Gastrocnemius medialis (tissue), 4 donors: ENCODE measurements at regions of chr7 and their contacts with region 1.

Region 1: DNA sequence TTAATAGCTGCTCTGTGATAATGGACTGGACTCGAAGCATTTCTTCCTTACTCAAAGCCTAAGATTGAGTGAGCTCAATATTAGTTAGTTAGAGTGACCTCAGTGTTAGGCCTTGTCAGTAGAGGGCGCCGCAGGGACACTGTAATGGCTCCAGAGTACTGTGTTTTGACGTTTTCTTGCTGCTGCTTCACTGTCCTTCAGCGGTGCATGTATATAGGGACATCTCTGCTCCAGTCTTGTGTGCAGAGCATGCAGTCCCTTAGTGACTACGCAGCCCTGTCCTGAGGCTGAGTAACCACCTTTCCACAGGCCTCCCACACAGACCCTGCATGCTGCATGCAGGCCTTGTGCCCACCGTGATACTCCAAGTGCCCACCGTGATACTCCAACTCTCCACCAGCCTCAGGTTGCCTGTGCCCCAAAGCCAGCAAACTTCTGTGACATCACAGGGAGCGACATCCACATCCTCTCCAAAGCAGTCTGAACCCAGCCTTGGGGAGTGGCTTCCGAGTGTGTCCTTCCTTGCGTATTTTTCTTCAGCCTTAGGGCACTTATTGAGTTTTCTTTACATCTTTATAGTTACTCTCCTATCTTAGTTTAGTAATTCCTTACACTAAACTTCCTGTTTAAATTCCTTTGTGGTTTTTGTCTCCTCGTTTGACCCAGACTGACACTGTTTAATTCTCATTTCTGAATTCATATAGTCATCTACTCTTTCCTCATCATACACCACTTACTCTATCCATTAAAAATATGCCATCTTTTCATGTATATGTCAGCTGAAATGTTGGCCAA is 118.2 kb downstream of the JAZF1 start:
- DNase-seq: peak; percentile 24 to 66
- ATAC-seq: peak; percentile 72 to 91
- H3K4me3 ChIP-seq: no peak overlapping the region
- H3K27ac ChIP-seq: no peak overlapping the region
- H3K4me1 ChIP-seq: peaks cover 0 to 4% of the 10 kb centered on the region in 2 donors
- H3K27me3 ChIP-seq: no peaks in the 10 kb centered on the region
- CTCF ChIP-seq: peak in 4 of 5 experiments; percentile 51 to 73 (median 62)
- POLR2A ChIP-seq: no peak

Region 2: GRCh38 chr7:28096713-28097112 is 34.3 kb after region 1 on chr7:
- in situ Hi-C with region 1: loop called in 1 of 4 experiments (anchors 5 kb)
- intact Hi-C with region 1: loop called (anchors 1 kb)
- DNase-seq: peak; percentile 38 to 46
- ATAC-seq: peak; percentile 30 to 82
- H3K4me3 ChIP-seq: no peak overlapping the region
- H3K27ac ChIP-seq: peak overlapping the region in 1 of 4 donors; percentile 22
- H3K4me1 ChIP-seq: peaks cover 0 to 8% of the 10 kb centered on the region in 2 donors
- H3K27me3 ChIP-seq: no peaks in the 10 kb centered on the region
- CTCF ChIP-seq: peak; percentile 77 to 86 (median 85)
- POLR2A ChIP-seq: no peak